ENCODE measurements at regions of chr1 and their contacts with region 1.

Region 1: DNA sequence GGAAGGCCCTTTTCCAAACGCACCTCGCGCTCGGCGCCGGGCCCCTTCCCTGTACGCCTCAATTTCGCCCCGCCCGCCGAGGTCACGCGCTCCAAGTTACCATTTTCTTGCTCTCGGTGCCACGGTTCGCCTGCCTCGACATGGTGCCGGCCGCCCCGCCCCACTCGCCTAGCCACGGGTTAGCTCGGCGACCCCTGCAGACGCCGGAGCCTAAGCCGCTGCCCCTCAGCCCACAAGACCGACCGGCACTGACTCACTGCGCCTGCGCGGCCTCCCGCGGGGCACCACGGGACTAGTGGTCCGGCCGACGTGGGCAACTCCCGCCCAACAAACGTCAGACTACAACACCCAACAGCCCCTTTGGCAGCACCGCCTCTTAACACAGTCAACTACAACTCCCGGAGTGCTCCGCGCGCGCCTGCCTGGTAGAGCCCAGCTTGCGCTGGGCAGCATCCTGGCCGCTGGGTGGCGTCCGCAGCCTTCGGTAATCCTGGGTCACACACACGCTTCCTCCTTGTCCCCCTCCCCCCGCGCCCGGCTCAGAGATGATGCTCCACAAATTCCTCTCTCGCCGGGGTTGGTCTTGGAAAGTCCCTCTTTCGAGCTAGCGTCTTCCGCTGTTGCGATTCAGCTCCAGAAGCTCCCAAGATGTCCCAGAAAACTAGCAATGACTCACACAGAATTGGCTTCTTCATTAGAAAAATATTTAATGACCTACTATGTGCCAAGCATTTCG is at the start of gene TRAPPC3:
- DNase-seq: peak; percentile 100
- H3K4me3 ChIP-seq: peak within 1 kb of the TSS; percentile 62
- H3K27ac ChIP-seq: peak within 1 kb of the TSS; percentile 80
- H3K4me1 ChIP-seq: peaks cover 33% of the 10 kb centered on the region
- H3K27me3 ChIP-seq: no peaks in the 10 kb centered on the region
- CTCF ChIP-seq: peak; percentile 99
- total RNA-seq, gene TRAPPC3: 86.5 and 86.6 TPM in 2 replicates

Region 2: DNA sequence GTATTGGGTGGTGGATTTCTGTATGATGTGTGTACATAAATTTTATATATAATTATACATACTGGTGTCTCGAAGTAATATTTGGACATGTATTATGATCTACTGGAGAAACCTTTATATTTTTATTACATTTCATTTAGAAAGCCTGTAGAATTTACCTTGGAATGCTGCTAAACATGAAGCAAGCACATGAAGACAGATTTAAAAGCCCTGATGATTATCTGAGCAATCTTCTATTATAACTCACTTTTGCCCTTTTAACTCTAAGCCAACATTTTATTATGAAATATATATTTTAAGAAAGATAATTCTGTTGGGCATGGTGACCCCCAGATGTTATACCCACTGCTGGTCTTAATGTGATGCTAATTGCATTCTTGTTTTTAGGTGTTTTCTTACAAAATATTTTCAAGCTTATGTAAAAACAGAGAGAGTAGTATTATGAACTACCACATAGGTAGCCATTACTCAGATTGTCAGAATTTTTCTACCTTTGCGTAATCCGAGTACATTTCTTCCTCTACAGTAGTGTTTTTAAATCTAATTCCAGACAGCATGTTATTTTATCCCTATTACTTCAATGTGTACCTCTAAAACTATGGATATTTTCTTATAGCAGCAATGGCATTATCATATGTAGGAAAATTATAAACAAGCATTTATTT is 175.7 kb before region 1 on chr1:
- CTCF ChIA-PET with region 1: no interaction called
- POLR2A ChIA-PET with region 1: no interaction called
- intact Hi-C with region 1: no loop called
- DNase-seq: no peak
- H3K4me3 ChIP-seq: no peak overlapping the region
- H3K27ac ChIP-seq: no peak overlapping the region
- H3K4me1 ChIP-seq: no peaks in the 10 kb centered on the region
- H3K27me3 ChIP-seq: no peaks in the 10 kb centered on the region
- CTCF ChIP-seq: no peak

Region 3: GRCh38 chr1:36187800-36188593 is 38.6 kb after region 1 on chr1:
- CTCF ChIA-PET with region 1: interaction called, 27 read pairs
- POLR2A ChIA-PET with region 1: interaction called, 3 read pairs
- intact Hi-C with region 1: loop called (anchors 1 kb)
- DNase-seq: peak; percentile 91
- H3K4me3 ChIP-seq: no peak overlapping the region
- H3K27ac ChIP-seq: no peak overlapping the region
- H3K4me1 ChIP-seq: no peaks in the 10 kb centered on the region
- H3K27me3 ChIP-seq: no peaks in the 10 kb centered on the region
- CTCF ChIP-seq: peak; percentile 91

Region 4: GRCh38 chr1:36223993-36224536 is 74.7 kb after region 1 on chr1 and contains the start of gene THRAP3:
- CTCF ChIA-PET with region 1: no interaction called
- POLR2A ChIA-PET with region 1: no interaction called
- intact Hi-C with region 1: loop called (anchors 2 kb)
- DNase-seq: peak; percentile 100
- H3K4me3 ChIP-seq: peak within 1 kb of the TSS; percentile 61
- H3K27ac ChIP-seq: peak within 1 kb of the TSS; percentile 95
- H3K4me1 ChIP-seq: peaks cover 13% of the 10 kb centered on the region
- H3K27me3 ChIP-seq: no peaks in the 10 kb centered on the region
- CTCF ChIP-seq: no peak
- total RNA-seq, gene THRAP3: 133 and 143 TPM in 2 replicates

Region 5: GRCh38 chr1:36369061-36369861 is 219.9 kb after region 1 on chr1:
- CTCF ChIA-PET with region 1: interaction called, 4 read pairs
- POLR2A ChIA-PET with region 1: no interaction called
- intact Hi-C with region 1: loop called (anchors 1 kb)
- DNase-seq: peak; percentile 86
- H3K4me3 ChIP-seq: no peak overlapping the region
- H3K27ac ChIP-seq: peak overlapping the region; percentile 51
- H3K4me1 ChIP-seq: peaks cover 53% of the 10 kb centered on the region
- H3K27me3 ChIP-seq: no peaks in the 10 kb centered on the region
- CTCF ChIP-seq: peak; percentile 91

Region 6: GRCh38 chr1:36450270-36450918 is 301.0 kb after region 1 on chr1 and contains the start of gene OSCP1:
- CTCF ChIA-PET with region 1: no interaction called
- POLR2A ChIA-PET with region 1: no interaction called
- intact Hi-C with region 1: no loop called
- DNase-seq: peak; percentile 96
- H3K4me3 ChIP-seq: peak within 1 kb of the TSS; percentile 73
- H3K27ac ChIP-seq: peak within 1 kb of the TSS; percentile 93
- H3K4me1 ChIP-seq: peaks cover 12% of the 10 kb centered on the region
- H3K27me3 ChIP-seq: no peaks in the 10 kb centered on the region
- CTCF ChIP-seq: no peak
- total RNA-seq, gene OSCP1: 5.7 and 10.6 TPM in 2 replicates

Measured in A673 (cell line).